ENCODE measurements at regions of chr6 and their contacts with region 1.

Region 1: DNA sequence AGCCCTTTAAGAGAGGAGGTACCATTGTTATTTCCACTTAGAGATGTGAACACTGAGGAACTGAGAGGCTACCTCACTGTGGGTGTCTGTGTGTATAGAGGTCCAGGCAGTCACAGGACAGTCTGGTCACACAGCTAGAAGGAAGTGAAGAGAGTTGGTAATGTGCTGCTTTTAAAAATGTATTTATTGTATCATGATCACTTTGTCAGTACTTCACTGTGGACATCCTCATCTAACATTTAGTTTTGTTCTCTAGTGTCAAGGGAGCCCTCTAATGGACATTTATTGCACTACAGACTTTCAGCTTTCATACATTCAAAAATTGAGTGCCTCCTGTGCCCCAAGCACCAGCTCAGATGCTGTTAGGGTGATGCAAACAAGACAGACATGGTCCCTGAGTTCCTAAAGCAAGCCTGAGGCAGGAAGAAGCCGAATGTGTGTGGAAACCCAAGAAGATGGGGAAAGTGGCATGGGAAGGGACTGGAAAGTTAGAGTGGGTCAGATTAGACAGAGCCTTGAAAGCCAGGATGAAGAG is 123.0 kb downstream of the SLC16A10 start:
- DNase-seq: peak; percentile 72
- H3K4me3 ChIP-seq: no peak overlapping the region
- H3K27ac ChIP-seq: no peak overlapping the region
- H3K4me1 ChIP-seq: no peaks in the 10 kb centered on the region
- H3K27me3 ChIP-seq: no peaks in the 10 kb centered on the region

Region 2: DNA sequence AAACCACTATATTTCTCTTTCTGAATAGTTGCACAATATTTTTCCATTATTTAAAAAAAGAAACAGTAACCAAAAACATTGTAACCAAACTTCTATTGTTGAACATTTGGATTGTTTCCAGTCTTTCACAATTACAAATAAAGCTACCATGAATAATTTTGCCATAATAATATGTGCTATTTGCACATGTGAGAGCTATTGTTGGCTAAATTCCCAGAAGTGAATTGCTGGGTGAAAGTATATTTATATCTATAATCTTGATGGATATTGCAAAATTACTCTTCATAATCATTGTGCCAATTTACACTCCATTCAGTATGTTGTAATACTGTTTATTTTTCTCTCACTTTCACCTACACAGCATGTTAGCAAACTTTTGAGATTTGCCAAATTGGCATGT is 697.3 kb before region 1 on chr6:
- in situ Hi-C with region 1: loop called (anchors 25 kb)
- DNase-seq: no peak
- H3K4me3 ChIP-seq: no peak overlapping the region
- H3K27ac ChIP-seq: no peak overlapping the region
- H3K4me1 ChIP-seq: peaks cover 16% of the 10 kb centered on the region
- H3K27me3 ChIP-seq: peaks cover 35% of the 10 kb centered on the region